ENCODE measurements at regions of chr3 and their contacts with region 1.

Region 1: DNA sequence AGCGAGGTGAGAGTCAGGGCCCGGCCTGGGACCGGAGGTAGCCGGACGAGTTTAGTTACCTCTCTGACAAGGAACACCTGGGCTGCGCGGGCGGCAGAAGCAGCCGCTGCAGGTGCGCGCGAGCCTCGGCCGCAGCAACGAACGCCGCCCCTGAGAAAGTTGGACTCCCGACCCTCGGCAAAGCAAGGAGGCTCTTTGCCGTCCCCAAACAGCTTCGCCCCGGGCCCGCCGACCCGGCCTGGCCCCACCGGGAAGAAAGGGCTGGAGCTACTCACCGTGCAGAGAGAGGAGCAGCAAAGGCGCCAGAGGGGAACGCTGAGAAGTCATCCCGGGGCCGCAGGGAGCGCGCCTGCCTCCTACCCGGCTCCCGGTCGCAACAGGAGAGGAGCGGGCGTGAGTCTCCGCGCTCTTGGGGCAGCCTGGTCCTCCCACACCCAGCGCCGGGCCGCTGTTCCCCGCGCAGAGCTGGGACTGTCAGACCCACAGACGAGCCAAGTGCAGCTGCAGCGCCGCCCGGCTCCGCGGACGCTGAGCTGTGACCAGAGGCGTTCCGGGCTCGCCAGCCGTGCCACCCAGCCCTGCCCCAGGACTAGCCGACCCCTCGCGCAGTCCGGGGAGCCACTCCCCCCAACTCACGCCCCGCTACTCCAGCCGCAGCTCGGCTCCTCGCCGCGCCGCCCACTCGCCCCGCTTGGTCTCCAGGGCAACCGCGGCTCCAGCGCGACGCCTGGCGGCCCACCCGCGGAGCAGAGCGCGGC is at the start of gene IGSF11:
- DNase-seq: peak; percentile 73
- ATAC-seq: peak; percentile 97
- H3K4me3 Mint-ChIP-seq: peak within 1 kb of the TSS; percentile 89
- H3K27ac Mint-ChIP-seq: peak within 1 kb of the TSS; percentile 43
- H3K4me1 Mint-ChIP-seq: peaks cover 13% of the 10 kb centered on the region
- H3K27me3 Mint-ChIP-seq: peaks cover 47% of the 10 kb centered on the region
- total RNA-seq, gene IGSF11: 2.0 to 2.5 TPM

Region 2: GRCh38 chr3:118890186-118890585 is 144.2 kb before region 1 on chr3:
- CTCF ChIA-PET with region 1: interaction called, 373 read pairs
- POLR2A ChIA-PET with region 1: no interaction called
- DNase-seq: no peak
- ATAC-seq: no peak
- H3K4me3 Mint-ChIP-seq: no peak overlapping the region
- H3K27ac Mint-ChIP-seq: no peak overlapping the region
- H3K4me1 Mint-ChIP-seq: peaks cover 10% of the 10 kb centered on the region
- H3K27me3 Mint-ChIP-seq: peaks cover 6% of the 10 kb centered on the region

Region 3: DNA sequence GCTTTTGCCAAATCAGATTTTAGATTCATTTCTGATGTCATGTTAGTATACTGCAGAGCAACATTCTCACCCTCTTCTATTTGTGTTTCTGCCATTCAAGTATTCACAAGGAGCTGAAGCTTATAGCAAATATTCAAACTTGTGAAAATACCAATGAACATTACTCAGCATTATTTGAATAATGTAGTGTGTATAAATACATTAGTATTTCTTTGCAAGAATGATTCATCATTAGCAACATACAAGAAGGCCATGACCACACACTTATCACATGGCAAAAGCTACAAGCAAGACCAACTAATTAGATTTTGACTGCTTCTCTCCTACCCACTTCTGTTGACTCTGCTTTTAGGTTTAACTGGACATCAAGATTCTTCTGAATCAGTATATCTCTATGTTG is 124.7 kb before region 1 on chr3:
- CTCF ChIA-PET with region 1: interaction called, 14 read pairs
- POLR2A ChIA-PET with region 1: no interaction called
- DNase-seq: no peak
- ATAC-seq: no peak
- H3K4me3 Mint-ChIP-seq: no peak overlapping the region
- H3K27ac Mint-ChIP-seq: no peak overlapping the region
- H3K4me1 Mint-ChIP-seq: peaks cover 2% of the 10 kb centered on the region
- H3K27me3 Mint-ChIP-seq: peaks cover 8% of the 10 kb centered on the region

Region 4: DNA sequence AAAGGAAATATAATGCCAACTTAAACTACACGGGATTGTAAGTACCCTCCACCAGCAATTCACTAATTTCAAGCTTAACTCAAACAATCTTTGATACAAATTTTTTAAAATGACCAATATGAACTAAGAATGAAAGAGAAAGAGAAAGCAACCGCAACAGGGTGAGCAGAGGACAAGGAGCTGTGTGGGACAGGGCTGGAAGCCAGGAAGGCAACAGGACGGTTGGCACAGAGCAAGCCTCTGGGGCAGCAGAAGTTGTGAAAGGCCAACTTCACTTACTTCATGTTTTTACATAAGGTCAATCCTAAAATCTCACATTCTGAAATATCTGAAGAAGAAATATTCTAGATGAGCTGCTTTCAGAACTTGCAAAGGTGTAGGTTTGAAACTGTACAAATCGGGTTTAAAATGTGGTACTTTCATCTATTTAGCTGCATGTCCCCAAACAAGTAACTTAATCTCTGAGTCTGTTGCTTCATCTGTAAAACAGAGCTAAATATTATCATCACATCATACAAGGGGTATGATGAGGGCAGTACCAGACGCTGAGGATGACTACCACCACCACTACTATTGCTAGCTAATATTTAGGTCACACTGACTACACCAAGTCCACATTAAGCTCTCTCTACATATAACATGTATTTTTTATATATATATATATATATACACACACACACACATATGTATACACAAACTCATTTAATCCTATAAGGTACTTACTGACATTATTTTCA is 101.4 kb before region 1 on chr3:
- CTCF ChIA-PET with region 1: interaction called, 10 read pairs
- POLR2A ChIA-PET with region 1: no interaction called
- DNase-seq: no peak
- ATAC-seq: no peak
- H3K4me3 Mint-ChIP-seq: no peak overlapping the region
- H3K27ac Mint-ChIP-seq: no peak overlapping the region
- H3K4me1 Mint-ChIP-seq: peaks cover 8% of the 10 kb centered on the region
- H3K27me3 Mint-ChIP-seq: no peaks in the 10 kb centered on the region

Region 5: DNA sequence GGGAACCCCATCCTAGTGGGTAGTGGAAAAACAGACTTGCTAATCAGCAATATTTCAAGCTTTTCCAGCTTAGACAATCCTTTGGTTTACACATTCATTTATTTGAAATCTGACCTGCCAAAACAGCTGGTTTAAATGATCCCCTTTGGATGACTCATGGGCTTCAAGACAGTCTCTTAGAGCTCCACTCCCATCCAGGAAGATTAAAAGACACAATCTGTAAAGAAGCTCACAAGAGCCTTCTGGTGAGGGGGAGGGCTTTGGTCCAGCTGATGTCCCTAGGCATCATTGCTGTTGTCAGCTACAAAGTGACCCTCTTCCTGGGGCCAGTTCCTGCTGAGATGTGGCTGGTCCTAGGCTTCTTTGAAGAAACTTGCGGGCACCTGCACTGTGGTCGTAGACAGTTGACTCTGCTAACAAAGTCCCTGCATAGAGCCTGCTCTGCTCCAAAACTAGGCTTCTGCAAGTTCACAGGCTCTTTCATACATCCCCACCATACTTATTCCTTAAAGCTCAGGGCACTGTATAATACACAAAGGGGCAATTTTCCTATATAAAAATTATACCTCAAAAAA is 73.5 kb before region 1 on chr3:
- CTCF ChIA-PET with region 1: interaction called, 12 read pairs
- POLR2A ChIA-PET with region 1: no interaction called
- DNase-seq: no peak
- ATAC-seq: no peak
- H3K4me3 Mint-ChIP-seq: no peak overlapping the region
- H3K27ac Mint-ChIP-seq: no peak overlapping the region
- H3K4me1 Mint-ChIP-seq: peaks cover 20% of the 10 kb centered on the region
- H3K27me3 Mint-ChIP-seq: peaks cover 2% of the 10 kb centered on the region